Posterior vena cava (tissue), 2 donors: ENCODE measurements at regions of chr3 and their contacts with region 1.

Region 1: GRCh38 chr3:113626503-113627371 is 69.7 kb downstream of the USF3 start:
- DNase-seq: no peak

Region 2: GRCh38 chr3:113514265-113514769 is 112.4 kb before region 1 on chr3:
- intact Hi-C with region 1: loop called (anchors 10 kb)
- DNase-seq: no peak

Region 3: DNA sequence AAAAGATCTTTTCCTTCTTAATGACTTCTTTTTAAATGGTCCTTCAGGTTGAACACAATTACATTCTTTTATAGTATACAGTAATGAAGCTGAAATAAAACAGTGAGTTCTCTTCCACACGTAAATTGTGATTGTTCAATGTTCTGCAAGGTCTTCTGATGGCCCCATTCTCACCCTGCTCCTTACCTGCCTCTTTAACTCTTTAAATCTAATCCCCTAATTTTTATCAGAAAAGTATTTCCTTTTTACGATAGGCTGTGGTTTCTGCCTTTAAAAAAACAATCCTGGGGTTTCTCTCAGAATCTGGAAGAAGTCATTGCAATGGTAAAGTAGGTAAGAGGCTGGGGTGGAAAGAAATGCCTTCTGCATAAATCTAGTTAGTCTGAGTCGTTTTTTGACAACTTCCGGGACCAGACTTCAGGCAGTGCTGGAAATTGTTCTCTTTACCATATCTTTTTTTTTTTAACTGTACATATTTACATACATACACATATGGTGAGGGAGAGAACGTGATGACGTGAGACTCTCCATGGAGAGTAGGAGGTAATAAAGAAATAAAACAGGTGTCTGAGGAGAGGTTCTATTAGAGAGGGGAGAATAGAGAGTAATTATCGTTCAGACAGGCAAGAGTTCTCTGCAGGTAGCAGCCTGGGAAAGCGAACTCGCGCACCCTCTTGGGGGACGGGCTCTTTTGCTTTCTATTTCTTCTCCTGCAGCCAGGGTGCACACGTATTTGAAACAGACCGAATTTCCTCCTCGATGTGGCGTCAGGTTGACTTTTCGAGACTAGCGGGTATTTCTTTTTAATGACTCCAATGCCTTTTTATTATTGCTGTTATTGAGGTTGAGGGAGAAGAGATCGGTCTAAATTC is 94.7 kb before region 1 on chr3 and contains the start of gene SIDT1:
- intact Hi-C with region 1: no loop called
- DNase-seq: no peak
- total RNA-seq, gene SIDT1: 1.00 to 2.1 TPM

Region 4: DNA sequence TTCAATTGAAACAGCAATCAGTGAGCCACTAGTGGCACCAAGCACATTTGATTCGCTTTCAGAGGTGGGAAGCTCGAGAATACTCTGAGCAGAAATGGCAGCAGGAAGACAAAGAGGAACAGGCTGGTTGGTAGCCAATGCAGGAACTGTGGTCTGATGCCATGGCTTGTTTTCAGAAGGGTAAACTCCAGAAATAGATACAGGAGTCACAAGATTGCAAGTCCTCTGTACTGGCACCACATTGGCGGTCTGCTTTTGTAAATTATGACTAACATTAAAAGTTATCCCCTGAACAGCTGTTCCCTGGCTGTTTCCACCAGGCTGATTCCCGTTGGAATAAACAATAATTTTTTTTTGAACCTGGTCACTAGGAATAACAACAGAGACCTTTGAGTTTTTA is 34.2 kb after region 1 on chr3:
- intact Hi-C with region 1: loop called in 1 of 2 experiments (anchors 1 kb)
- DNase-seq: no peak